ENCODE measurements at regions of chr18 and their contacts with region 1.

Region 1: DNA sequence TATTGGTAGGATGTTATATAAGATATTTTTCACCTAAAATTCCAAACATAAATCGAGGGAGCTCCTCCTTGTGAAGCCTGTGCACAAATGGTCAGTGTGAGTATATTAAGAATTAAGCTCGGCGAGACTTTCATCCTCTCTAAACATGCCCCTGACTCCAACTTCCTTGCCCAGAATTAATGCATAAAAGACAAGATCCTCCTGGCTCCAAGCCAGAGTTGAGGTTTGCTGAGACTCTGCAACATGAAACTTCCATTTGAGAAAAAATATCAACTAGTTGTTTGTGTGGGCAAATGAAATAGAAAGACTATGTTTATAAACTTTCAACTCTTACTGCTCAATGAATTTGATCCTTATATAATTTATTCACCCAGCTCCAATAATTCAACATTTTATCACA is 68.1 kb downstream of the CCDC178 start:
- DNase-seq: no peak
- ATAC-seq: no peak
- H3K4me3 ChIP-seq: no peak overlapping the region
- H3K4me3 Mint-ChIP-seq: no peak overlapping the region
- H3K27ac ChIP-seq: no peak overlapping the region
- H3K27ac Mint-ChIP-seq: no peak overlapping the region
- H3K4me1 ChIP-seq: no peaks in the 10 kb centered on the region
- H3K4me1 Mint-ChIP-seq: no peaks in the 10 kb centered on the region
- H3K27me3 ChIP-seq: no peaks in the 10 kb centered on the region
- H3K27me3 Mint-ChIP-seq: no peaks in the 10 kb centered on the region

Region 2: DNA sequence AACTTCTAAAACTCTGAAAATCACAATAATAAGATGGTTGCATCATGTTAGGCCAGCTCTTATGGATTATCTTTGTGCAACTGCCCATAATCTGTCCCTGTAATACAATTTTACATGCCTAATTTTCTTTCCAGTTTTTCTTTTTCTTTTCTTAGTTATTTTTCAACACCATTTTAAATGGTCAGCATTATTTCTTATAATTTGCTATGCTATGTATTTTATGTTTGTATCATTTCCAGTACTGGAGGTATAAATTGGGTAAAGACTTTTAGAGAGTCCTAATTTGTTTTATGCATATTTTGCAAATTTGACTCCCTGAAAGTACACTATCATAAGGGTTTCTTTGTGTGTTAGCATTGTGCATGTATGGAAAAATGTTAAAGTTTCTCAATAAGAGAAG is 264.9 kb before region 1 on chr18:
- CTCF ChIA-PET with region 1: no interaction called
- POLR2A ChIA-PET with region 1: no interaction called
- intact Hi-C with region 1: no loop called
- DNase-seq: no peak
- ATAC-seq: no peak
- H3K4me3 ChIP-seq: no peak overlapping the region
- H3K4me3 Mint-ChIP-seq: no peak overlapping the region
- H3K27ac ChIP-seq: no peak overlapping the region
- H3K27ac Mint-ChIP-seq: no peak overlapping the region
- H3K4me1 ChIP-seq: no peaks in the 10 kb centered on the region
- H3K4me1 Mint-ChIP-seq: no peaks in the 10 kb centered on the region
- H3K27me3 ChIP-seq: no peaks in the 10 kb centered on the region
- H3K27me3 Mint-ChIP-seq: no peaks in the 10 kb centered on the region

Region 3: GRCh38 chr18:33432857-33433256 is 60.4 kb after region 1 on chr18:
- CTCF ChIA-PET with region 1: no interaction called
- POLR2A ChIA-PET with region 1: no interaction called
- intact Hi-C with region 1: loop called in 1 of 2 experiments (anchors 10 kb)
- DNase-seq: no peak
- ATAC-seq: no peak
- H3K4me3 ChIP-seq: no peak overlapping the region
- H3K4me3 Mint-ChIP-seq: no peak overlapping the region
- H3K27ac ChIP-seq: no peak overlapping the region
- H3K27ac Mint-ChIP-seq: no peak overlapping the region
- H3K4me1 ChIP-seq: no peaks in the 10 kb centered on the region
- H3K4me1 Mint-ChIP-seq: no peaks in the 10 kb centered on the region
- H3K27me3 ChIP-seq: no peaks in the 10 kb centered on the region
- H3K27me3 Mint-ChIP-seq: no peaks in the 10 kb centered on the region